Ascending aorta (tissue), 2 donors: ENCODE measurements at regions of chr4 and their contacts with region 1.

Region 1: DNA sequence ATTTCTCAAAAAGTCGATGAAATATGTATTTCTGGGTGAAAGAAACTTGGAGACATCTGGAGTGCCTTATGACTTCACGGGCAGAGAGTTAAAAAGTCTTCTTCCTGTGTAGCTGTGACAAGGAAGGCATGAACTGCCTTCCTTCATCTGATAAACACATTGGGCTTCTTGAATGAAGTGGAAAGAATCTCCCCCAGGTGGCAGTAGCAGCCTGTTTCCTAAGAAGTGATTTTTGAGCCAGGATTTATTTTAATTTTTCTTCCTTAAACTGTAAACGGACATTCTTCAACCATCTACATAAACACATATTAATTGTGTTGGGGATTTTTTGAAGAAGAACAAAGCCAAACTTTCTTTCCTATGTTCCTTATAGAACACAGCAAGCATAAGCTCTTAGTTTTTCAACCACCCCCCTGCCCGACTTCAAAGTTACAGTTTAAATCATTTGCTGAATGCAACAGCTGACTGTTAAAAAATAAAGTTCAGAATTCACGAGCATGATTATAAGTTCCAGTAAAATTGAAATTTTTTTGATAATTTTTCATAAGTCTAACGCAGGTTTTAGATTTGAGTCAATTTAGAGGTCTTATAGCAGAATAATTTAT is 980 bp upstream of the GIMD1 start:
- DNase-seq: peak in 1 of 2 donors; percentile 67
- H3K4me3 ChIP-seq: peak overlapping the region in 1 of 2 donors; percentile 14
- H3K27ac ChIP-seq: no peak overlapping the region
- H3K4me1 ChIP-seq: peaks cover 0 to 14% of the 10 kb centered on the region in 2 donors
- H3K27me3 ChIP-seq: no peaks in the 10 kb centered on the region
- CTCF ChIP-seq: peak; percentile 26 to 80 (median 62)

Region 2: GRCh38 chr4:106315968-106316772 is 53.4 kb before region 1 on chr4 and contains the starts of genes AIMP1 and TBCK:
- intact Hi-C with region 1: loop called (anchors 2 kb)
- DNase-seq: peak; percentile 70 to 94
- H3K4me3 ChIP-seq: peak within 1 kb of the TSS; percentile 70 to 87
- H3K27ac ChIP-seq: peak within 1 kb of the TSS; percentile 89 to 97
- H3K4me1 ChIP-seq: peaks cover 3 to 32% of the 10 kb centered on the region in 2 donors
- H3K27me3 ChIP-seq: no peaks in the 10 kb centered on the region
- CTCF ChIP-seq: no peak
- total RNA-seq, gene AIMP1: 14.9 TPM
- total RNA-seq, gene TBCK: 35.7 TPM

Region 3: GRCh38 chr4:106809076-106809475 is 439.5 kb after region 1 on chr4:
- intact Hi-C with region 1: loop called (anchors 2 kb)
- DNase-seq: no peak
- H3K4me3 ChIP-seq: no peak overlapping the region
- H3K27ac ChIP-seq: no peak overlapping the region
- H3K4me1 ChIP-seq: no peaks in the 10 kb centered on the region
- H3K27me3 ChIP-seq: no peaks in the 10 kb centered on the region
- CTCF ChIP-seq: peak; percentile 44 to 61 (median 52)

Region 4: GRCh38 chr4:107037199-107037584 is 667.6 kb after region 1 on chr4:
- intact Hi-C with region 1: loop called (anchors 10 kb)
- DNase-seq: peak in 1 of 2 donors; percentile 68
- H3K4me3 ChIP-seq: peak overlapping the region; percentile 49 to 75
- H3K27ac ChIP-seq: no peak overlapping the region
- H3K4me1 ChIP-seq: no peaks in the 10 kb centered on the region
- H3K27me3 ChIP-seq: no peaks in the 10 kb centered on the region
- CTCF ChIP-seq: peak; percentile 25 to 65 (median 54)

Region 5: GRCh38 chr4:108008721-108009120 is 1639.2 kb after region 1 on chr4:
- intact Hi-C with region 1: loop called (anchors 10 kb)
- DNase-seq: no peak
- H3K4me3 ChIP-seq: no peak overlapping the region
- H3K27ac ChIP-seq: peak overlapping the region in 1 of 2 donors; percentile 39
- H3K4me1 ChIP-seq: peaks cover 0 to 29% of the 10 kb centered on the region in 2 donors
- H3K27me3 ChIP-seq: no peaks in the 10 kb centered on the region
- CTCF ChIP-seq: no peak